Colonic mucosa (tissue), 4 donors: ENCODE measurements at regions of chr10 and their contacts with region 1.

Region 1: DNA sequence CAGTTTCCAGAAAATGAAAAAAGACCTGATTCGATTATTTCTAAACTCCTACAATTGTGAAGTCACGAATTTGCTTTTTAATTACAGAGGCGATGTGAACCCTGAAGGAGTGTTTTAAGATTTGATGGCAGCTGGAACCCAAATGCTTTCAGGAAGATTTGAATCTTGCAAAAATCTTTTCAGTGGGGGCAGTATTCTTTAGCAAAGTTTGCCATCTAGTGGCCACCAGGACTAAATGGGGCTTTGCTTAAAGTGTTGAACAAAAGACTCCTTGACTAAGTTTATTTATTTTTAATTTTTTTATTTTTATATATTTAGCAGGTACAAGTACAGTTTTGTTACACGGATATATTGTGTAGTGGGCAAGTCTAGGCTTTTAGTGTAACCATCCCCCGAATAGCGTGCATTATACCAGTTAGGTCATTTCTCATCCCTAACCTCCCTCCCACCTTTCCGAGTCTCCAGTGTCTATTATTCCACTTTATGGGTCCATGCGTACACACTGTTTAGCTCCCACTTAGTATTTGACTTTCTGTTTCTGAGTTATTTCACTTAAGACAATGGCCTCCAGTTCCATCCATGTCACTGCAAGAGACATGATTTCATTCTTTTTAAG is 98.8 kb downstream of the CACNB2 start:
- DNase-seq: no peak
- H3K4me3 ChIP-seq: no peak overlapping the region
- H3K27ac ChIP-seq: no peak overlapping the region
- H3K4me1 ChIP-seq: no peaks in the 10 kb centered on the region
- H3K27me3 ChIP-seq: no peaks in the 10 kb centered on the region
- CTCF ChIP-seq: peak; percentile 60

Region 2: GRCh38 chr10:17847585-17848296 is 391.2 kb before region 1 on chr10:
- intact Hi-C with region 1: loop called (anchors 5 kb)
- DNase-seq: no peak
- H3K4me3 ChIP-seq: no peak overlapping the region
- H3K27ac ChIP-seq: no peak overlapping the region
- H3K4me1 ChIP-seq: no peaks in the 10 kb centered on the region
- H3K27me3 ChIP-seq: no peaks in the 10 kb centered on the region
- CTCF ChIP-seq: no peak